ENCODE measurements at regions of chr16 and their contacts with region 1.

Region 1: GRCh38 chr16:66977341-66978113 is 10.9 kb upstream of the CES4A start:
- DNase-seq: peak; percentile 82
- ATAC-seq: peak; percentile 93
- H3K4me3 ChIP-seq: peak overlapping the region in 1 of 3 experiments; percentile 36; a peak in 1 of 6 replicates
- H3K27ac ChIP-seq: no peak overlapping the region
- H3K4me1 ChIP-seq: peaks cover 66% of the 10 kb centered on the region
- H3K27me3 ChIP-seq: peaks cover 2 to 9% of the 10 kb centered on the region in 2 experiments; a peak in 3 of 5 replicates
- CTCF ChIP-seq: peak; percentile 100
- EP300 ChIP-seq: no peak
- POLR2A ChIP-seq: no peak; a peak in 1 of 4 replicates
- RAD21 ChIP-seq: peak; percentile 100

Region 2: DNA sequence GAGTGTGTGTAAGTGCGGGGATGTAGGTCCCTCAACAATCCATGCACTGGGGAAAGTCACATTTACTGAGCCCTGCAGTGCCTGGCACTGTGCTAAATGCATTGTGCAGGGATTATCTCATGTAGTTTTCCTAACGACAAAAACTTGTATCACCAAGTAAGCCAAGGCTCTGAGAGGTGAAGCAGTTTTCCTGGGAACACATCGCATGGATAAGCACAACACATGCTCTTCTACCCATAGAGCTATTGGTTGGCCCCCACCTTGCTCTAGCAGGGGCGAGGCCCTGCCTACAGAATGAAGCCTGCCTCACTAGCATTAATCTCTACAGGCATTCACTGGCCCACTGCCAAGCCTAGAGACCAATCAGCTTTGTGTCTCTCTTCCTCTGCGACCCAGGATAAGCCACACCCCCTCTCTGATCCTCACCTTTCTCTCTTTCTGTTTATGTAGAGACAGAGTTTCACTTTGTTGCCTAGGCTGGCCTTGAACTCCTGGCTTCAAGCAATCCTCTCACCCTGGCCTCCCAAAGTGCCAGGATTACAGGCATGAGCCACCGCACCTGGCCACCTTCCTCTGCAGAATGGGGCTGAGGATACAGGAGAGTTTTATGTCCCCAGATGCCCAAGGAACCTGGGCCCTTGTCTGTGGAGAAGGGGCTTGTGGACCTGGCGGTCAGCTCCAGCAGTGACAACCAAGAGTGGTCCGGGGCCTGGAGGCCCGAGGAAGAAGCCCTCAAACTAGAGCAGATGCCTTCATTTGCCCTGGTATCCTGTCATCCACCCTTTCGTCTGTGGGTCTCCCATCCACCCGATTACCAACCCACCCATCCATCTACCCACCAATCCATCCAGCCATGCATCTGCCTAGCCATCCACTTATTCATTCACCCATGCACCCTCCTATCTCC is 71.6 kb before region 1 on chr16:
- CTCF ChIA-PET with region 1: no interaction called
- POLR2A ChIA-PET with region 1: no interaction called
- in situ Hi-C with region 1: no loop called
- intact Hi-C with region 1: no loop called
- DNase-seq: peak; percentile 99
- ATAC-seq: peak; percentile 73
- H3K4me3 ChIP-seq: peak overlapping the region; percentile 52 to 72 (median 56)
- H3K27ac ChIP-seq: peak overlapping the region; percentile 75
- H3K4me1 ChIP-seq: peaks cover 84% of the 10 kb centered on the region
- H3K27me3 ChIP-seq: no peaks in the 10 kb centered on the region
- CTCF ChIP-seq: 0 out of 2 replicates have a peak, but pooled peaks have one; percentile 8
- EP300 ChIP-seq: peak in 1 of 2 experiments; percentile 75; a peak in 2 of 4 replicates
- POLR2A ChIP-seq: peak; percentile 54 to 66
- RAD21 ChIP-seq: no peak

Region 3: GRCh38 chr16:66954097-66954659 is 23.3 kb before region 1 on chr16:
- CTCF ChIA-PET with region 1: interaction called, 4 read pairs
- POLR2A ChIA-PET with region 1: interaction called, 3 read pairs
- in situ Hi-C with region 1: no loop called
- intact Hi-C with region 1: loop called (anchors 2 kb)
- DNase-seq: peak; percentile 85
- ATAC-seq: peak; percentile 86
- H3K4me3 ChIP-seq: peak overlapping the region in 2 of 3 experiments; percentile 25 to 40; a peak in 4 of 6 replicates
- H3K27ac ChIP-seq: no peak overlapping the region
- H3K4me1 ChIP-seq: peaks cover 73% of the 10 kb centered on the region
- H3K27me3 ChIP-seq: peaks cover 3 to 14% of the 10 kb centered on the region in 2 experiments; a peak in 4 of 5 replicates
- CTCF ChIP-seq: peak; percentile 96
- EP300 ChIP-seq: no peak
- POLR2A ChIP-seq: no peak
- RAD21 ChIP-seq: peak; percentile 79

Region 4: GRCh38 chr16:67028555-67029248 is 51.2 kb after region 1 on chr16 and contains the start of gene CBFB:
- CTCF ChIA-PET with region 1: no interaction called
- POLR2A ChIA-PET with region 1: no interaction called
- in situ Hi-C with region 1: no loop called
- intact Hi-C with region 1: no loop called
- DNase-seq: peak; percentile 90
- ATAC-seq: peak; percentile 89
- H3K4me3 ChIP-seq: peak within 1 kb of the TSS; percentile 96 to 99 (median 98)
- H3K27ac ChIP-seq: peak within 1 kb of the TSS; percentile 97
- H3K4me1 ChIP-seq: peaks cover 80% of the 10 kb centered on the region
- H3K27me3 ChIP-seq: no peaks in the 10 kb centered on the region; a peak in 1 of 5 replicates
- CTCF ChIP-seq: peak; percentile 47; the same call in 1 of the 2 replicates
- EP300 ChIP-seq: no peak
- POLR2A ChIP-seq: peak; percentile 95 to 99
- RAD21 ChIP-seq: peak; percentile 54; the same call in 1 of the 2 replicates
- total RNA-seq, gene CBFB: 70.8 and 76.0 TPM in 2 replicates

Region 5: DNA sequence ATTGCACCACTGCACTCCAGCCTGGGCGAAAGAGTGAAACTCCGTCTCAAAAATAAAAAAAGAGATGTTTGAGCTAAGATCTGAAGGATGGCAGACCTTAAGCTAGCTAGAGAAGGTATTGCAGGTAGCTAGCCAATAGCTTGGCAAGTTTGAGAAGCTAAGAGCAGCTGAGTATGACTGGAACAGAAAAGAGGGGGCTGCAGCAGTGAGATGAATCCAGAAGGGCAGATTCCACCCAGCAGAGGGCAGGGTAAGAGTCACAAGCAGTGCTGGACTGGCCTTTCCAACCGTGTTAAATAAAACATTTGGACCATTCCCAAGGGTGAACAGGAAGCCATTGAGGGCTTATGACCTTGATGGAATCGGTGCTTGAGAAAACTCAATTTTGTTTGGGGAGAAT is 126.5 kb after region 1 on chr16:
- CTCF ChIA-PET with region 1: interaction called, 12 read pairs
- POLR2A ChIA-PET with region 1: no interaction called
- in situ Hi-C with region 1: no loop called
- intact Hi-C with region 1: loop called (anchors 1 kb)
- DNase-seq: peak; percentile 68
- ATAC-seq: peak; percentile 92
- H3K4me3 ChIP-seq: no peak overlapping the region
- H3K27ac ChIP-seq: no peak overlapping the region
- H3K4me1 ChIP-seq: peaks cover 10% of the 10 kb centered on the region
- H3K27me3 ChIP-seq: no peaks in the 10 kb centered on the region
- CTCF ChIP-seq: peak; percentile 85
- EP300 ChIP-seq: no peak
- POLR2A ChIP-seq: no peak
- RAD21 ChIP-seq: peak; percentile 71

Region 6: GRCh38 chr16:67173808-67174705 is 196.5 kb after region 1 on chr16:
- CTCF ChIA-PET with region 1: no interaction called
- POLR2A ChIA-PET with region 1: no interaction called
- in situ Hi-C with region 1: no loop called
- intact Hi-C with region 1: loop called (anchors 1 kb)
- DNase-seq: peak; percentile 82
- ATAC-seq: peak; percentile 82
- H3K4me3 ChIP-seq: peak overlapping the region; percentile 52 to 75 (median 59)
- H3K27ac ChIP-seq: no peak overlapping the region
- H3K4me1 ChIP-seq: peaks cover 63% of the 10 kb centered on the region
- H3K27me3 ChIP-seq: peaks cover 0 to 2% of the 10 kb centered on the region in 2 experiments; a peak in 2 of 5 replicates
- CTCF ChIP-seq: peak; percentile 85
- EP300 ChIP-seq: no peak
- POLR2A ChIP-seq: peak in 1 of 2 experiments; percentile 11; a peak in 1 of 4 replicates
- RAD21 ChIP-seq: peak; percentile 82

Region 7: DNA sequence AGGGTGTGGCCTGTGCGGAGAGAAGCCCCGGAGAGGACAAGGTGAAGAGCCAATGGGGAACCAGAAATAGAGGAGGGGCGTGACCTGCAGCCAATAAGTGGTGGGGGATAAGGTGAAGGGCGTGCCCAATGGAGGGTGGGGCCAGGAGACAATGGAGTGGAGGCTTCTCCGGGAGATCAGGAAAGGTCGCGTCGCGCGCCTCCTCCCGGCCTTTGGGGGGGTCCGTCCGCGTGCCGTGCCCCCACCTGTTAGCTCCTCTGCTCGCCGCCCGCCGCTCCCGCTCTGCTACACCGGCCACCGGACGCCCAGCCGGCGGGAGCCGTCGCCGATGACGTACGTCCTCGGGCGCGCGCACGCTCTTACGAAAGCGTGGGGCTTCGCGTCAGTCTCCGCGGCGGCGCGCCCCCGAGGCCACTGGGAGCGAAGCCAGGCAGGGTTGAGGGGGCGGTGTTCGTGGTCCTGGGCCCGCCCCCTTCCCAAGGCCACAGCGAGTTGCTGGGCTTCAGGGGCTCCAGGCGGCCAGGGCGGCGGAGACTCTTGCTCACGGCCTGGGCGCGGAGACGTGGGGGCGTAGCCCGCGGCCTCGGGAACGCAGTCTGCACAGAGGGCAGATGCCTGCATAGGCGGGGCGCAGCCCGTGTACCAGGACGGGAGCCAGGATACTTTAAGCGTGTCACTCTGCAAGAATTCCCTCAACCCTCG is 206.3 kb after region 1 on chr16 and contains the start of gene MATCAP1:
- CTCF ChIA-PET with region 1: interaction called, 28 read pairs
- POLR2A ChIA-PET with region 1: no interaction called
- in situ Hi-C with region 1: loop called (anchors 5 kb)
- intact Hi-C with region 1: loop called (anchors 1 kb)
- DNase-seq: peak; percentile 99
- ATAC-seq: peak; percentile 84
- H3K4me3 ChIP-seq: peak within 1 kb of the TSS; percentile 72 to 98 (median 82)
- H3K27ac ChIP-seq: peak within 1 kb of the TSS; percentile 82
- H3K4me1 ChIP-seq: peaks cover 48% of the 10 kb centered on the region
- H3K27me3 ChIP-seq: peaks cover 5 to 7% of the 10 kb centered on the region in 2 experiments; a peak in 2 of 5 replicates
- CTCF ChIP-seq: peak; percentile 45
- EP300 ChIP-seq: 0 out of 4 replicates have a peak, but pooled peaks of 1 of the 2 experiments have one; percentile 6
- POLR2A ChIP-seq: peak in 1 of 2 experiments; percentile 67; a peak in 2 of 4 replicates
- RAD21 ChIP-seq: no peak
- total RNA-seq, gene MATCAP1: 4.4 and 11.2 TPM in 2 replicates